CD4-positive, alpha-beta T cell (primary cell): ENCODE measurements at regions of chr18 and their contacts with region 1.

Region 1: DNA sequence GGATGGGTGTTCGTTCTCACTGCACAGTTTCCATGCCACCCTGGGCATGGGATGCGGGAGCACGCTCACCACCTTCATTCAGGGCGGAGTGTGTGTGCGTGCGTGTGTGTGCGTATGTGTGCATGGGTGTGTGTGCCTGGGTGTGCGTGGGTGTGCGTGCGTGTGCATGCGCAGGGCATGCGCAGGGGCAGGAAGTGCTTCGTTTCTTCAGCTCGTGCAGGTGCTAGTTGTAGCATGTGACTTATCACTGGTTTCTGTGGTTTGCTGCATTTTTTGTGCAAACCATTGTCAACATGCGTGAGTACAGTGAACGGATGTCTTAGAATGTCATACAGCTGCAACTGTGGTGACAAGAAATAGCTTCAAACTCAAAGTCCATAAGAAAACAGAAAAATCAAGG is 179.5 kb downstream of the PTGR3 start:
- DNase-seq: peak in 10 of 14 experiments; percentile 13 to 56 (median 40)
- ATAC-seq: peak; percentile 86
- H3K4me3 ChIP-seq: no peak overlapping the region
- H3K4me3 Mint-ChIP-seq: no peak overlapping the region
- H3K27ac ChIP-seq: no peak overlapping the region
- H3K27ac Mint-ChIP-seq: peak overlapping the region; percentile 74
- H3K4me1 ChIP-seq: peaks cover 6% of the 10 kb centered on the region
- H3K4me1 Mint-ChIP-seq: peaks cover 20% of the 10 kb centered on the region
- H3K27me3 ChIP-seq: no peaks in the 10 kb centered on the region
- H3K27me3 Mint-ChIP-seq: no peaks in the 10 kb centered on the region
- CTCF ChIP-seq: no peak

Region 2: DNA sequence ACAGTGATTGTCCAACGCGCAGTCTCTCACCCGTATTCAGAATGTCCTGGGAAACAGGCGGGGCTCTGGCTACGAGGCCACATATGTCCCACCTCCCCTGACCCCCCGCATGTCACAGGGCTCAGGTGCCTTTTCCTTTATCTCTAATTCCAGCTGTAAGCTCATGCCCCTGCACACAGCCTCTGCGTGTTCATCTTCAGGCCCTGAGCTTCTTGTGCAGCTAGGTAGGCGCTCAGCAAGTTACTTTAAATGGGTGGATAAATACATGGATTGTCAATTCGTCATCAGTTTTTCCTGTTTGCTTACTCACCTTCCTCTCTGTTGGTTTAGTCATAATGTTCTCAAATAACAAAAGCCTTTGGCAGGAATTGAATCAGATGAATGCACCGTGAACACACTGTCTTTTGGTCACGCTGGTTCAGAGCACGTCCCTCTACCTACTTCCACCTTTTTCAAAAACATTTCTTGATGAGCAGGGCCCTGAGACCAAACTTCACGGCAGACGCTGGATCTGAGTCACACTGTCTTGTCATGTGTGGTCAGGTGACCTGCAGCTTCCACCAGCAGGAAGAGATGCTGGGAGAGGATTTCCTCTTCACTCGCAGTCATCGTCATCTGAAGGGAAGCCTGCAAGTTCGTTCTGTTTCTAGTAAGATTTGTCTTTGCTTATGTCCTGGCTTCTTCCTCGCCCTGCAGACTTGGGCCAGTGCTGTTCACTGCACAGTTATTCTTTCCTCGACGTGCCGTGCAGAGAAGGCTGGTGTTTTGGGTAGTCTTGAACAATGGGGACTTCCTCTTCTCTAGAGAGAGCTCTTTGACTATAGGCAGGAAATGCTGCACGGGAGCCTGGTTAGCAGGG is 41.4 kb after region 1 on chr18:
- CTCF ChIA-PET with region 1: no interaction called
- POLR2A ChIA-PET with region 1: interaction called, 13 read pairs
- intact Hi-C with region 1: no loop called
- DNase-seq: peak; percentile 47 to 88 (median 72)
- ATAC-seq: peak; percentile 87
- H3K4me3 ChIP-seq: peak overlapping the region; percentile 54
- H3K4me3 Mint-ChIP-seq: peak overlapping the region; percentile 88
- H3K27ac ChIP-seq: peak overlapping the region; percentile 71 to 91
- H3K27ac Mint-ChIP-seq: peak overlapping the region; percentile 95
- H3K4me1 ChIP-seq: peaks cover 53% of the 10 kb centered on the region
- H3K4me1 Mint-ChIP-seq: peaks cover 46% of the 10 kb centered on the region
- H3K27me3 ChIP-seq: no peaks in the 10 kb centered on the region
- H3K27me3 Mint-ChIP-seq: no peaks in the 10 kb centered on the region
- CTCF ChIP-seq: no peak